ENCODE measurements at regions of chr18 and their contacts with region 1.

Region 1: GRCh38 chr18:69557282-69557681 is 156.6 kb downstream of the DOK6 start:
- DNase-seq: no peak
- ATAC-seq: no peak
- H3K4me3 ChIP-seq: no peak overlapping the region
- H3K27ac ChIP-seq: no peak overlapping the region
- H3K4me1 ChIP-seq: no peaks in the 10 kb centered on the region
- H3K27me3 ChIP-seq: no peaks in the 10 kb centered on the region

Region 2: GRCh38 chr18:69674292-69674877 is 117.1 kb after region 1 on chr18:
- intact Hi-C with region 1: no loop called
- DNase-seq: no peak
- ATAC-seq: peak; percentile 11
- H3K4me3 ChIP-seq: no peak overlapping the region
- H3K27ac ChIP-seq: no peak overlapping the region
- H3K4me1 ChIP-seq: peaks cover 0 to 2% of the 10 kb centered on the region in 2 donors
- H3K27me3 ChIP-seq: no peaks in the 10 kb centered on the region

Region 3: DNA sequence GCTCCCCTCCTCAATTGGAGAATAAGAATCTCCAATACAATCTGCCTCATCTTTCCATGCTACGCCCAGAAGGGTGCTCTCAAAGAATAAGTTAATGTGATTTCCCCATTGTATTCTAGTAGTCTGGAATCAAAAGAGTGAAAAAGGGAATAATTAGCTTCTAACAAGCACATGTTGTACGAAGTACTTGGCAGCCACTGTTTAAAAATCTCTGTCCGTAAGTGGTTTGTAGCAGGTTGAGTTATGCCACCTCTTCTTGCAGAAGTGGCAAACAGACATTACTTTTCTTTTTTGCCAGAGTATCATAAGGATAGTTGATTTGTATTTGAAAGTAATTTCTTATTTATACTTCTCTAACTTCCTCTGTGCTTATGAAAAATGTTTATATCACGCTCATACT is 205.7 kb after region 1 on chr18:
- intact Hi-C with region 1: loop called in 1 of 2 experiments (anchors 10 kb)
- DNase-seq: no peak
- ATAC-seq: no peak
- H3K4me3 ChIP-seq: no peak overlapping the region
- H3K27ac ChIP-seq: no peak overlapping the region
- H3K4me1 ChIP-seq: no peaks in the 10 kb centered on the region
- H3K27me3 ChIP-seq: no peaks in the 10 kb centered on the region